ENCODE measurements at regions of chr9 and their contacts with region 1.

Region 1: GRCh38 chr9:115591584-115591984 is 473.6 kb upstream of the TNC start:
- DNase-seq: peak; percentile 87
- H3K4me3 ChIP-seq: no peak overlapping the region
- H3K27ac ChIP-seq: peak overlapping the region in 3 of 4 donors; percentile 36 to 38 (median 37)
- H3K4me1 ChIP-seq: peaks cover 0 to 13% (median 7%) of the 10 kb centered on the region in 4 donors
- H3K27me3 ChIP-seq: no peaks in the 10 kb centered on the region
- CTCF ChIP-seq: peak; percentile 34 to 70 (median 54)
- EP300 ChIP-seq: no peak
- POLR2A ChIP-seq: no peak

Region 2: DNA sequence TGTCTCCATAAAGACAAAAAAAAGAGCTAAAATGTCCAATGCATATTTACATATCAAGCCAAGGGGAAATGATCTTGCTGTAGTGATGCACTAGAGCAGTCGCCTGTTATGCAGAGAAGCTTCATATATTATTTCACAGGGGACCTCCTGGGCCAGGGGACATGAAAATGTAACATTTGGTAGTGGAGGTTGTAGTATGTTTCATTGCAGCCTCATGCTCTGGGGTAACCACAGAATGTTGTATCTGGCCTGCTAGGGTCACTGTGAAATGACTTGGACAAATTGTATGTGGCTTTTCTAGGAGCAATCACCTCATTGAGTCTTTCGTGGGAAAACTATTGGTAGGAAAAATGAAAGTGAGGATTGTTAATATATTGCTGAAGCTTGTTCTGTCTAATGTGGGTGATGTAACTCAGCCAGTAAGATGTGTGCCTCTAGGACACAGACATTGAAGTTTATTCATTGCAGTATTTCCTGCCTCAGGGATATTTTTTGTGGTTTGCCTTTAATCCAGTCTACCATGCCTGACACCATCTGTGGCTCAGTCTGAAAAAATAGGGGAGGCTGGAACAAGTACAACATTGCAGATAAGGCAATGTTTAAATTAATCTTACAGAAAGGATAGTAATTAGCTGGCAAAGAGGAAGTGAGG is 42.8 kb before region 1 on chr9:
- intact Hi-C with region 1: no loop called
- DNase-seq: no peak
- H3K4me3 ChIP-seq: no peak overlapping the region
- H3K27ac ChIP-seq: no peak overlapping the region
- H3K4me1 ChIP-seq: no peaks in the 10 kb centered on the region
- H3K27me3 ChIP-seq: no peaks in the 10 kb centered on the region
- CTCF ChIP-seq: no peak
- EP300 ChIP-seq: no peak
- POLR2A ChIP-seq: no peak

Region 3: DNA sequence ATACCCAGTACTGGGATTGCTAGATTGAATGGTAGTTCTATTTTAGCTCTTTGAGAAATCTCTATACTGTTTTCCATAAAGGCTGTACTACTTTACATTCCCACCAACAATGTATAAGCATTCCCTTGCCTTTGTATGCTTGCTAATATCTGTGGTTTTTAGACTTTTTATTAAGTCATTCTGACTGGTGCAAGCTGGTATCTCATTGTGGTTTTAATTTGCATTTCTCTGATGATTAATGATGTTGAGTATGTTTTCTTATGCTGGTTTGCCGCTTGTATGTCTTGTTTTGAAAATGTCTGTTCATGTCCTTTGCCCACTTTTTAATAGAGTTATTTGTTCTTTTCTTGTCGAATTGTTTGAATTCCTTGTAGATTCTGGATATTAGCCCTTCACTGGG is 49.3 kb after region 1 on chr9:
- intact Hi-C with region 1: no loop called
- DNase-seq: no peak
- H3K4me3 ChIP-seq: no peak overlapping the region
- H3K27ac ChIP-seq: no peak overlapping the region
- H3K4me1 ChIP-seq: peaks cover 0 to 17% (median 6%) of the 10 kb centered on the region in 4 donors
- H3K27me3 ChIP-seq: no peaks in the 10 kb centered on the region
- CTCF ChIP-seq: no peak
- EP300 ChIP-seq: no peak
- POLR2A ChIP-seq: no peak

Region 4: GRCh38 chr9:115680231-115680630 is 88.6 kb after region 1 on chr9:
- intact Hi-C with region 1: loop called (anchors 10 kb)
- DNase-seq: no peak
- H3K4me3 ChIP-seq: no peak overlapping the region
- H3K27ac ChIP-seq: no peak overlapping the region
- H3K4me1 ChIP-seq: peaks cover 0 to 4% (median 0%) of the 10 kb centered on the region in 4 donors
- H3K27me3 ChIP-seq: no peaks in the 10 kb centered on the region
- CTCF ChIP-seq: no peak
- EP300 ChIP-seq: no peak
- POLR2A ChIP-seq: no peak

Region 5: GRCh38 chr9:116149844-116150243 is 558.3 kb after region 1 on chr9:
- intact Hi-C with region 1: loop called (anchors 2 kb)
- DNase-seq: no peak
- H3K4me3 ChIP-seq: no peak overlapping the region
- H3K27ac ChIP-seq: no peak overlapping the region
- H3K4me1 ChIP-seq: peaks cover 0 to 14% (median 9%) of the 10 kb centered on the region in 4 donors
- H3K27me3 ChIP-seq: peaks cover 6 to 36% (median 6%) of the 10 kb centered on the region in 3 donors
- CTCF ChIP-seq: peak in 2 of 4 experiments; percentile 30 to 31
- EP300 ChIP-seq: no peak
- POLR2A ChIP-seq: no peak

Region 6: GRCh38 chr9:116494815-116495634 is 903.4 kb after region 1 on chr9:
- intact Hi-C with region 1: loop called (anchors 5 kb)
- DNase-seq: no peak
- H3K4me3 ChIP-seq: no peak overlapping the region
- H3K27ac ChIP-seq: no peak overlapping the region
- H3K4me1 ChIP-seq: peaks cover 0 to 7% (median 0%) of the 10 kb centered on the region in 4 donors
- H3K27me3 ChIP-seq: no peaks in the 10 kb centered on the region
- CTCF ChIP-seq: peak; percentile 8 to 48 (median 44)
- EP300 ChIP-seq: no peak
- POLR2A ChIP-seq: no peak

Region 7: DNA sequence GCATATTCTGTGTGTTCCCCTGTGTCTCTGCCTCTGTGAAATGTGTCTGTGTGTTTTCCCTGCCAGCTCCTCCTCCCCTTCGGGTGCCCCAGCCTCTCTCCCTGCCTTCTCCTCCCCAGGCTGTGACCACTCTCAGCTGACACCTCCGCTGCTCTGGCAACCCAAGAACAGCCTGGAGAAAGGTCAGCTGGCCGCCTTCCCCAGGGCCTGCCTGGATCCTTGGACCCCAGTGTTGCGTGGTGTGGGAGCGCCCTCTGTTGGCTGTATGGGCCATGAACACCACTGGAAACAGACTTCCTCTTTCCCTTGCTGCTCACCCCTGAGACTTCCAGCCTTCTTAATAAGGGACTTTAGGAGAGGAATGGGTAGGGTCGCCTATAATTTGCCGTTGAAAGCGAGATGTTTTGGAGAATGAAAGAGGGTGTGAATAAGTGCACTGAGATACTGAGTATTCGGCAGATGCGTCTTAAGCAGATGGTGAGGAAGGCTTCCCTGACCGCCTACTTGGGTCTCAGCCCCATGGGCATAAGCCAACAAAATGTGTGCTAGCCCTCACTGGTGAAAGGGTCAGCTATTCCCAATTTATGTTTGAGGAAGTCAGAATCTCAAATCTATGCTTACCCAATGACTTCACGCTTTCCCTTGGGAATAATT is 980.6 kb after region 1 on chr9:
- intact Hi-C with region 1: loop called (anchors 1 kb)
- DNase-seq: peak; percentile 94
- H3K4me3 ChIP-seq: no peak overlapping the region
- H3K27ac ChIP-seq: no peak overlapping the region
- H3K4me1 ChIP-seq: peaks cover 0 to 22% (median 9%) of the 10 kb centered on the region in 4 donors
- H3K27me3 ChIP-seq: no peaks in the 10 kb centered on the region
- CTCF ChIP-seq: peak; percentile 81 to 93 (median 88)
- EP300 ChIP-seq: no peak
- POLR2A ChIP-seq: no peak

Region 8: DNA sequence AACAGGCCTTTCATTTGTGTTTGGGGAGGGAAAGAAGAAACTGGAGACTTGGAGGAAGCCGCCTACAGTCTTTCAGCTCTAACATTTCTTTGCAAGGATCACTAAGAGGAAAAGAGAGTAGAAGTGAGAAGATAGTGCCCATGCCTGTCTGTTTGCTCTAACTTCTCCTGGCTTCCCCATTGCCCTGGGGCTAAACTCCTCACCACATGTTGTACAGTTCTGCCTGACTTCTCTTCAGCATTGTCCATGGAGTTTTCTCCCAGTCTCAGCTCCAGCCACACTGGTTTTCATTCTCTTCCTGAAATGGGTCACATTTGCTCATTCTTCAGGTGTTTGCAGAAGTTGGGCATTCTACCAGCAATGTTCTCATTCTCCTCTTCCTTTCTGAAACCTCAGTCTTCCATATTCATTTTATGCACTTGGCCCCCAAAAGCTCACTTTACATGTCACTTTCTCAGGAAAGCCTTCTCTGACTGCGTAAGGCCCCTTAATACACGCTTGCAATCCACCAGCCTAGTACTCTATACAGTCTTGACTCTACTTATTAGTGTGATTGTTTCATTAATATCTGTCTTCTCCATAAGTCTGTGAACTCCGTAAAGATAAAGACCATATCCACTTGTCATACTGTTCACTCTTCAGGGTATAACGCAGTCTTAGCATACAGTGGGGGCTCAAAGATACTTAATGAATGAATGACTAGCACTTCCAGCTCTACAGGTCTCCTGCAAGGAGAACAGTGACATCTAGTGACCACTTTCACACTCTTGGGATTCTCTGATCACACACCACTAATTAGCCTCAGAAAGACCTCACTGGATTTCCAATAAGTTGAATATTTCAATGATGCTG is 1055.3 kb after region 1 on chr9:
- intact Hi-C with region 1: loop called (anchors 5 kb)
- DNase-seq: no peak
- H3K4me3 ChIP-seq: no peak overlapping the region
- H3K27ac ChIP-seq: no peak overlapping the region
- H3K4me1 ChIP-seq: peaks cover 0 to 7% (median 2%) of the 10 kb centered on the region in 4 donors
- H3K27me3 ChIP-seq: no peaks in the 10 kb centered on the region
- CTCF ChIP-seq: peak in 2 of 4 experiments; percentile 14 to 47
- EP300 ChIP-seq: no peak
- POLR2A ChIP-seq: no peak

Region 9: DNA sequence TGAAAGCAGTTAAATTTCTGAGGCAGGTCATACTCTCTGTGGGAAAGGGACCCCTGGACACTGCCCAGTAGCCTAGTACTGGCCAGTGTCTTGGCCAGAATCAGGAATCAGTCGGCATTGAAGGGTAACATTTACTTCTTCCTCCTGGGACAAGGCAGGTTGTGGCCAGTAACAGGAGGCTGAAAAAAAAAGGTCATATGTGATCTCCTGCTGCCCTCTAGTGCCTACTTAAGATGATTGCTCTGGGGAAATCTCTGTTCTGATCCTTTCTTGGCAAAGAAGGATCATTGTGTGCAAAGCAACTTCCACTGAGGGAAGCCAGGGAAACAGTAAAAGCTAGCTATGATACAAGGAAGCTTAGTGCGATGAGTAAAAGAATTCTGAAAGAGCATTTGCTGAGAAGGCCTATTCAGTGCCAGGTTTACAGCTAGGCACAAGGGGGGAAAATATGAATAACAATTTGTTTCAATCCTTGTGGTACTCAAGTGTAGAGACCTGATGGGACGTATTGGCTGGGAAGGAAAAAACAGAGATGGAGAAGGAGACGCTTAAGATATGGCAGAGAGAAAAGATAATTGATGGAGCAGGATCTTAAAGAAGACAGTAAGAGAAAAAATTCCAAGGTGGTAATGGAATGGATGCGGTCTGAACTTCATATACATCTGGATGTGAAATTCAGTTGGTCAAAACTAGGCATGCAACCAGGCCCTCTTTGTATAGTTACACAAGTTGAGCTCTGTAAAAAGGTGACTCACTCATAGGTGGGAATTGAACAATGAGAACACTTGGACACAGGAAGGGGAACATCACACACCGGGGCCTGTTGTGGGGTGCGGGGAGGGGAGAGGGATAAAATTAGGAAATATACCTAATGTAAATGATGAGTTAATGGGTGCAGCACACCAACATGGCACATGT is 1069.7 kb after region 1 on chr9:
- intact Hi-C with region 1: loop called (anchors 2 kb)
- DNase-seq: no peak
- H3K4me3 ChIP-seq: no peak overlapping the region
- H3K27ac ChIP-seq: no peak overlapping the region
- H3K4me1 ChIP-seq: peaks cover 0 to 7% (median 0%) of the 10 kb centered on the region in 4 donors
- H3K27me3 ChIP-seq: no peaks in the 10 kb centered on the region
- CTCF ChIP-seq: peak; percentile 51 to 72 (median 62)
- EP300 ChIP-seq: no peak
- POLR2A ChIP-seq: no peak

Measured in sigmoid colon (tissue), 7 donors.